ENCODE measurements at regions of chr4 and their contacts with region 1.

Region 1: DNA sequence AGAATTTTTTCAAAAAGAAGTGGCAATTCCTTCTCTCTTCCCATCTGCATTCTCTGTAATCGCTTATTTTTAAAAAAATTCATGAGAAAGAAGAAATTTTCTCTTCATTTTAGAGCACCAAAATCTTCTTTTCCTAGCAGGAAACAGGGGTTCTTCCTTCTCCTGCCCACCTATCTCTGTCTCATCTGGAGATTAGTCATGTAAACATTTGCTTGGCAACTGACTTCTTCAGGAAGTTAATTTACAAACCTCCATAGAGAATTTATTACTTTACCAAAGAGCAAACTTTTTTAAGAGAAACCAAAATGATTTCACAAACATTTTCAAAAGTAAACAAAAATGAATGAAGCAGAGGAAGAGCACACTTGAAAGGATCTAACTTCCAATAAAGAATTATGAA is 13.6 kb downstream of the TTC29 start:
- DNase-seq: no peak
- ATAC-seq: no peak
- H3K4me3 ChIP-seq: no peak overlapping the region
- H3K4me3 Mint-ChIP-seq: no peak overlapping the region
- H3K27ac ChIP-seq: no peak overlapping the region
- H3K27ac Mint-ChIP-seq: no peak overlapping the region
- H3K4me1 ChIP-seq: peaks cover 0 to 3% of the 10 kb centered on the region in 2 experiments
- H3K4me1 Mint-ChIP-seq: no peaks in the 10 kb centered on the region
- H3K27me3 ChIP-seq: no peaks in the 10 kb centered on the region
- H3K27me3 Mint-ChIP-seq: peaks cover 14 to 18% of the 10 kb centered on the region in 2 donors

Region 2: GRCh38 chr4:147068564-147068963 is 136.5 kb after region 1 on chr4:
- CTCF ChIA-PET with region 1: interaction called in 1 of 2 experiments, 21 read pairs
- POLR2A ChIA-PET with region 1: no interaction called
- DNase-seq: no peak
- ATAC-seq: no peak
- H3K4me3 ChIP-seq: no peak overlapping the region
- H3K4me3 Mint-ChIP-seq: no peak overlapping the region
- H3K27ac ChIP-seq: no peak overlapping the region
- H3K27ac Mint-ChIP-seq: no peak overlapping the region
- H3K4me1 ChIP-seq: no peaks in the 10 kb centered on the region
- H3K4me1 Mint-ChIP-seq: no peaks in the 10 kb centered on the region
- H3K27me3 ChIP-seq: peaks cover 0 to 2% of the 10 kb centered on the region in 2 experiments
- H3K27me3 Mint-ChIP-seq: peaks cover 15 to 34% of the 10 kb centered on the region in 2 donors

Measured in T-cell (primary cell).